RWPE1 (cell line): ENCODE measurements at regions of chr21 and their contacts with region 1.

Region 1: GRCh38 chr21:45596704-45597318 is 46.7 kb upstream of the PCBP3 start:
- DNase-seq: peak; percentile 57
- H3K27ac ChIP-seq: no peak overlapping the region
- CTCF ChIP-seq: peak; percentile 85

Region 2: DNA sequence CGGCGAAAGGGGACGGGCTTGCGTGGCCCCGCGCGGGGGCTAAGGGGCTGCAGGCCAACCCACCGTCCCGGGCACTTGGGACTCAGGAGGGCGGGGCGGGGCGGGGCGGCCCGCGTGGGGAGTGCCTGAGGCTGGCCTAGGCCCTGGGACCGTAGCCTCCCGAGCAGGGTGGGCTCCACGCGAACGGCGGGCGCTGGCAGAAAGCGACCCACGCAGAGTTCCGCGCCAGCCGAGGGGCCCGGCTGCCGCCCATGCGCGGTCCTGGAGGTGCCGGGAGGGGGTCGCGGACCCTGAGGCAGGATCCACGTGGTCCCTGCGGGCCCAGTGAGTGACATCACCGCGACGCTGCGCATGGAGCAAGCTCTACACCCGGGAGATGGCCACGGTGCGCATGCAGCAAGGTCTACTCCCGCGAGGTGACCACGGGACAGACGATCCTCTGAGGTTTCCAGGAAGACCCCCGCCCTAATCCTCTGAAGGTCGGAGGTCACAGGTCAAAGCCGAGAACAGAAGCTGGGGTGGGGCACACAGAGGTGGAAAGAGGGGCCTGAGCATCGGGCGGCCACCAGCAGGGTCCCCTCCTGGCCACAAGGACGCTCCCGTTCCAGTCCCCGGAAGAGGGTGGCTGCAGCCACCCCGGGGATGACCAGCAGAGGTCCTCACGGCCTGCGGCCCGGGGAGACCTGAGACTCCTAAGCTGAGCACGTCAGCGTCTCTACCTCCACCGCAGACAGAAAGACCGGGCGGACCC is 41.1 kb before region 1 on chr21:
- CTCF ChIA-PET with region 1: interaction called, 10 read pairs
- POLR2A ChIA-PET with region 1: no interaction called
- DNase-seq: peak; percentile 78
- H3K27ac ChIP-seq: peak overlapping the region; percentile 59
- CTCF ChIP-seq: peak; percentile 76